Sigmoid colon (tissue), 7 donors: ENCODE measurements at regions of chr1 and their contacts with region 1.

Region 1: DNA sequence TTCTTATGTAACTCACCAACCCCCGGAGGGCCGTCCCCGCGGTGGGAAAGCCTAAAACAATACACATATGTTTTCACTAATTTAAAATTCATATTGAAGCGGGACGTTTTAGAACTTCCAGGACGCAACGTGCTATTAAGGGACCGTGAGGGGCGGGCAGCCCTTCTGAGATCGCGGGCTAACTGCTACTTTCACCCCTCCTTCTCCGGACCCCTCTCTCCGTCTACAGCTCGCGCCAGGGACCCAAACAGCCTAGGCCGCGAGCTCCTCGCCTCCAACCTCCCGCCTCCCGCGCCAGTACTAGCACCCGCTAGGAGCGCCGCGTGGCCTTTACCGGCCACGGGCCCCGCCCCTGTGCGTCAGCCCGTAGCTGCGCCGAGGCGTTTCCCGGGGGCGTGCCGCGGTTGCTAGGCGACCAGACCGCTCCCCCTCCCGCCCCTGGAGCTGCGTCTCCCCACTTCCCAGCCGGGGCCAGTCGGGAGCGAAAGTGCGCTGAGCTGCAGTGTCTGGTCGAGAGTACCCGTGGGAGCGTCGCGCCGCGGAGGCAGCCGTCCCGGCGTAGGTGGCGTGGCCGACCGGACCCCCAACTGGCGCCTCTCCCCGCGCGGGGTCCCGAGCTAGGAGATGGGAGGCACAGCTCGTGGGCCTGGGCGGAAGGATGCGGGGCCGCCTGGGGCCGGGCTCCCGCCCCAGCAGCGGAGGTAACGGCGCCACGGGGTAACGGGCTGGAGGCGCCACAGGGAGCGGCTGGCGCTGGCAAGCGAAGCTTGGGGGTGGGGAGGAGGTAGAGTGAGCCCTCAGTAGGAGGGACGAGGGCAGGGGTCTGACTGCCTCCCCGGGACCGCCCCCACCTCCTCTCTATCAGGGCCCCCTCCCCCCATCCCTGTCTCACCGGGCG is at the start of gene DYRK3:
- DNase-seq: peak; percentile 98
- H3K4me3 ChIP-seq: peak within 1 kb of the TSS; percentile 70 to 93 (median 74)
- H3K27ac ChIP-seq: peak within 1 kb of the TSS; percentile 75 to 89 (median 86)
- H3K4me1 ChIP-seq: peaks cover 0 to 32% (median 24%) of the 10 kb centered on the region in 4 donors
- H3K27me3 ChIP-seq: no peaks in the 10 kb centered on the region
- CTCF ChIP-seq: peak in 1 of 4 experiments; percentile 11
- EP300 ChIP-seq: peak in 2 of 4 donors; percentile 40 to 45
- POLR2A ChIP-seq: peak; percentile 70 to 73
- total RNA-seq, gene DYRK3: 3.2 to 7.8 (median 6.2) TPM

Region 2: GRCh38 chr1:206663832-206664652 is 28.7 kb after region 1 on chr1:
- intact Hi-C with region 1: loop called (anchors 1 kb)
- DNase-seq: peak; percentile 77
- H3K4me3 ChIP-seq: peak overlapping the region in 3 of 4 donors; percentile 19 to 34 (median 21)
- H3K27ac ChIP-seq: peak overlapping the region in 1 of 4 donors; percentile 26
- H3K4me1 ChIP-seq: peaks cover 0 to 15% (median 11%) of the 10 kb centered on the region in 4 donors
- H3K27me3 ChIP-seq: peaks cover 0 to 5% (median 0%) of the 10 kb centered on the region in 3 donors
- CTCF ChIP-seq: peak; percentile 83 to 91 (median 88)
- EP300 ChIP-seq: no peak
- POLR2A ChIP-seq: no peak

Region 3: GRCh38 chr1:206716870-206717673 is 81.7 kb after region 1 on chr1:
- intact Hi-C with region 1: loop called (anchors 5 kb)
- DNase-seq: peak; percentile 69
- H3K4me3 ChIP-seq: no peak overlapping the region
- H3K27ac ChIP-seq: peak overlapping the region in 2 of 4 donors; percentile 85 to 88
- H3K4me1 ChIP-seq: peaks cover 0 to 88% (median 74%) of the 10 kb centered on the region in 4 donors
- H3K27me3 ChIP-seq: no peaks in the 10 kb centered on the region
- CTCF ChIP-seq: no peak
- EP300 ChIP-seq: no peak
- POLR2A ChIP-seq: no peak

Region 4: GRCh38 chr1:206784471-206784903 is 149.2 kb after region 1 on chr1:
- intact Hi-C with region 1: no loop called
- DNase-seq: no peak
- H3K4me3 ChIP-seq: no peak overlapping the region
- H3K27ac ChIP-seq: no peak overlapping the region
- H3K4me1 ChIP-seq: no peaks in the 10 kb centered on the region
- H3K27me3 ChIP-seq: no peaks in the 10 kb centered on the region
- CTCF ChIP-seq: no peak
- EP300 ChIP-seq: no peak
- POLR2A ChIP-seq: no peak

Region 5: DNA sequence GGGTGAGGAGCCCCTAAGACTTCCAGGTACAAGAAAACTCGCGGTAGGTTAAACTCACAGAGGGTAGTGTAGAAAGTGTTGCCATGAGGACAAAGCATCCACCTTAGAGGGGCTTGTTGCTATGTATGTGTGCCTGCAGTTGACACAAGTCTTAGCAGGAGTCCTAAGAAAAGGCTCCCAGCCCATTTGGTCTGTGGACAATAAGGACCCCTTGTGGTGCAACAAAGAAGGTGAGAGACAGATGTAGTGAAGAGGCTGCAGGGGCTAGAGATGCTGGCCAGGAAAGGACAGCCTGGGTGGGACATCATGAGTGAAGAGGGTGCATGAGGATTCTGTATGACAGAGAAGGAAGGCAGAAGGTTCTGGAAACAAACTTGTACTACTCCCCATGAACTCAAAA is 173.3 kb after region 1 on chr1:
- intact Hi-C with region 1: loop called (anchors 5 kb)
- DNase-seq: no peak
- H3K4me3 ChIP-seq: no peak overlapping the region
- H3K27ac ChIP-seq: no peak overlapping the region
- H3K4me1 ChIP-seq: no peaks in the 10 kb centered on the region
- H3K27me3 ChIP-seq: no peaks in the 10 kb centered on the region
- CTCF ChIP-seq: peak in 2 of 4 experiments; percentile 16 to 17
- EP300 ChIP-seq: no peak
- POLR2A ChIP-seq: no peak

Region 6: GRCh38 chr1:206912445-206913095 is 277.2 kb after region 1 on chr1:
- intact Hi-C with region 1: loop called (anchors 1 kb)
- DNase-seq: peak; percentile 87
- H3K4me3 ChIP-seq: no peak overlapping the region
- H3K27ac ChIP-seq: no peak overlapping the region
- H3K4me1 ChIP-seq: peaks cover 0 to 21% (median 15%) of the 10 kb centered on the region in 4 donors
- H3K27me3 ChIP-seq: peaks cover 0 to 21% (median 14%) of the 10 kb centered on the region in 3 donors
- CTCF ChIP-seq: peak; percentile 54 to 86 (median 82)
- EP300 ChIP-seq: no peak
- POLR2A ChIP-seq: no peak

Region 7: DNA sequence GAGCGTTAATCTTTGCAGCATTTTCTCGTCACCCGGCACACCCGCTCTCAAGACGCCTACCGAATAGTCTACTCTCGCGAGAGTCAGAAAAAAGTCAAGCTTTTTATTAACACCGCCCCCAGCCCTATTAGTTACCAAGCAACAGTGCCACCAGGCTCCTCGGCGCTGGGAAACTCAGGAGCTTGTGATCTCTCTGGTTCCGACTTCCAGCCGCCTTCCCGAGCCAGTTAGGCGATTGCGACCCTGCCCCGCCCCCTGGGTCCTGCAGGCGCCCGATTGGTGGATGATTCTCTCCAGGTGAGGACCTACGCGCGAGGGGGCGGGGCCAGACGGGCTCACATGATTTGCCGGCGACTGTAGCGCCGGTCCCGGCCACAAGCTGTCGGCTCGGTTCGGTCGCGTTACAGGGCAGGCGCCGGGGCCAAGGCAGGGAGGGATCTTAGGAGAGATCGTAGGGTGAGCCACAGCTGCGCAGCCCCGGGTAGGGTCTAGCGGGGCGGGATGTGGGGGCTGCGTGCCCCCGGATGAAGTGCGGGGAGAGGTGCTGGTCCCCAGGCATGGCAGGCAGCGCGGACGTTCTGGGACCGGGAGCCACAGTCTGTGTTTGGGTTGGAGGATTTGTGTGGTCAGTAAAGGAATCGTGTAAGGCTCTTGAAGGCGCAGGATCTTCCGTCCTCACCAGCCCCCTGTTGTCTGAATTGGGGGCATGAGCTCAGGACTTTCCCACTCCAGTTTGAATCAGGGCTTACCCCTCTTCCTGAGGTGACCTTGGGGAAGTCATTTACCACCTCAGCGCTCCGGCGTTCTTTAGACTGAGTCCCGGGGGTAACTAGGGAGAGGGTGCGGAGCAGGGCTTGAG is 417.8 kb after region 1 on chr1 and contains the start of gene PFKFB2:
- intact Hi-C with region 1: loop called (anchors 5 kb)
- DNase-seq: peak; percentile 98
- H3K4me3 ChIP-seq: peak within 1 kb of the TSS; percentile 48 to 66 (median 59)
- H3K27ac ChIP-seq: peak within 1 kb of the TSS; percentile 87 to 95 (median 90)
- H3K4me1 ChIP-seq: peaks cover 0 to 32% (median 30%) of the 10 kb centered on the region in 4 donors
- H3K27me3 ChIP-seq: no peaks in the 10 kb centered on the region
- CTCF ChIP-seq: peak in 3 of 4 experiments; percentile 12 to 51 (median 42)
- EP300 ChIP-seq: no peak
- POLR2A ChIP-seq: peak; percentile 62 to 88
- total RNA-seq, gene PFKFB2: 5.0 to 7.8 (median 5.5) TPM